MCF 10A (cell line): ENCODE measurements at regions of chr3 and their contacts with region 1.

Region 1: GRCh38 chr3:48194446-48195071 is 6.3 kb upstream of the CDC25A start:
- DNase-seq: peak; percentile 87
- H3K4me3 Mint-ChIP-seq: no peak overlapping the region
- H3K27ac Mint-ChIP-seq: no peak overlapping the region
- H3K4me1 Mint-ChIP-seq: no peaks in the 10 kb centered on the region
- H3K27me3 Mint-ChIP-seq: no peaks in the 10 kb centered on the region
- CTCF ChIP-seq: peak; percentile 94

Region 2: GRCh38 chr3:48119505-48120193 is 74.9 kb before region 1 on chr3:
- CTCF ChIA-PET with region 1: no interaction called
- POLR2A ChIA-PET with region 1: no interaction called
- intact Hi-C with region 1: no loop called
- DNase-seq: no peak
- H3K4me3 Mint-ChIP-seq: no peak overlapping the region
- H3K27ac Mint-ChIP-seq: no peak overlapping the region
- H3K4me1 Mint-ChIP-seq: no peaks in the 10 kb centered on the region
- H3K27me3 Mint-ChIP-seq: no peaks in the 10 kb centered on the region
- CTCF ChIP-seq: no peak

Region 3: GRCh38 chr3:48142316-48142870 is 52.2 kb before region 1 on chr3:
- CTCF ChIA-PET with region 1: no interaction called
- POLR2A ChIA-PET with region 1: no interaction called
- intact Hi-C with region 1: no loop called
- DNase-seq: peak; percentile 56
- H3K4me3 Mint-ChIP-seq: peak overlapping the region; percentile 21
- H3K27ac Mint-ChIP-seq: peak overlapping the region; percentile 57
- H3K4me1 Mint-ChIP-seq: peaks cover 15% of the 10 kb centered on the region
- H3K27me3 Mint-ChIP-seq: no peaks in the 10 kb centered on the region
- CTCF ChIP-seq: no peak

Region 4: DNA sequence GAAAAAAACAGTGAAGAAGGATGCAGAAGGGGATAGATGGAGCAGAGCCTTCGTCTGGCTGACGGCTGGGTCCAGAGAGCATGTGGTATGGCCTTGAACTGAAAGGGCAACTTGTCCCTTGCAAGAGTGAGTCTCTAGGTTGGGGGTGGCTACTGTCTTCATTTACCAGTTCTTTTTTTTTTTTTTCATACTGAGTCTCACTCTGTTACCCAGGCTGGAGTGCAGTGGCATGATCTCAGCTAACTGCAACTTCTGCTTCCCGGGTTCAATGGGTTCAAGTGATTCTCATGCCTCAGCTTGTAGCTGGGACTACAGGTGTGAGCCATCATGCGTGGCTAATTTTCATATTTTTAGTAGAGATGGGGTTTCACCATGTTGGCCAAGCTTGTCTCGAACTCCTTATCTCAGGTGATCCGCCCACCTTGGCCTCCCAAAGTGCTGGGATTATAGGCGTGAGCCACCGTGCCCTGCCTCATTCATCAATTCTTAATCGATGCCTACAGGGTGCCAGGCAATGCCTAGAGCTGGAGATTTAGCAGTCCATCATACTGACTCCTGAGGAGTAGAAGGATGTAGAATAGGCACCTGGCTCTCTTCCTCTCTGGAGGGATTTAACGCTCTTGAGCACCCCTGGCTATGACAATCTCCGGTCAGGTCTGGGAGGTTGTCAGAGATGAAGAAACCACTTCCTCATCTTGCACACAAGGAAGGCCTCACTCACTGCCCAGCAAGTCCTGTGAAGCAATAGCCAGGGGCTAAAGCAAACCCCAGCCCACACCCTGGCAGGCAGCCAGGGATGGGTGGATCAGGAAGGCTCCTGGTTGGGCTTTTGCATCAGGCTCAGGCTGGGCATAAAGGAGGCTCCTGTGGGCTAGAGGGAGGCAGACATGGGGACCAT is 28.3 kb after region 1 on chr3 and contains the start of gene CAMP:
- CTCF ChIA-PET with region 1: interaction called, 22 read pairs
- POLR2A ChIA-PET with region 1: no interaction called
- intact Hi-C with region 1: no loop called
- DNase-seq: peak; percentile 98
- H3K4me3 Mint-ChIP-seq: no peak within 1 kb of the TSS
- H3K27ac Mint-ChIP-seq: peak within 1 kb of the TSS; percentile 31
- H3K4me1 Mint-ChIP-seq: peaks cover 14% of the 10 kb centered on the region
- H3K27me3 Mint-ChIP-seq: no peaks in the 10 kb centered on the region
- CTCF ChIP-seq: no peak
- total RNA-seq, gene CAMP: 0.72 and 2.4 TPM in 2 replicates

Region 5: GRCh38 chr3:48232734-48233133 is 38.2 kb after region 1 on chr3:
- CTCF ChIA-PET with region 1: interaction called, 7 read pairs
- POLR2A ChIA-PET with region 1: no interaction called
- intact Hi-C with region 1: loop called (anchors 2 kb)
- DNase-seq: peak; percentile 87
- H3K4me3 Mint-ChIP-seq: peak overlapping the region; percentile 29
- H3K27ac Mint-ChIP-seq: no peak overlapping the region
- H3K4me1 Mint-ChIP-seq: peaks cover 11% of the 10 kb centered on the region
- H3K27me3 Mint-ChIP-seq: no peaks in the 10 kb centered on the region
- CTCF ChIP-seq: peak; percentile 65

Region 6: DNA sequence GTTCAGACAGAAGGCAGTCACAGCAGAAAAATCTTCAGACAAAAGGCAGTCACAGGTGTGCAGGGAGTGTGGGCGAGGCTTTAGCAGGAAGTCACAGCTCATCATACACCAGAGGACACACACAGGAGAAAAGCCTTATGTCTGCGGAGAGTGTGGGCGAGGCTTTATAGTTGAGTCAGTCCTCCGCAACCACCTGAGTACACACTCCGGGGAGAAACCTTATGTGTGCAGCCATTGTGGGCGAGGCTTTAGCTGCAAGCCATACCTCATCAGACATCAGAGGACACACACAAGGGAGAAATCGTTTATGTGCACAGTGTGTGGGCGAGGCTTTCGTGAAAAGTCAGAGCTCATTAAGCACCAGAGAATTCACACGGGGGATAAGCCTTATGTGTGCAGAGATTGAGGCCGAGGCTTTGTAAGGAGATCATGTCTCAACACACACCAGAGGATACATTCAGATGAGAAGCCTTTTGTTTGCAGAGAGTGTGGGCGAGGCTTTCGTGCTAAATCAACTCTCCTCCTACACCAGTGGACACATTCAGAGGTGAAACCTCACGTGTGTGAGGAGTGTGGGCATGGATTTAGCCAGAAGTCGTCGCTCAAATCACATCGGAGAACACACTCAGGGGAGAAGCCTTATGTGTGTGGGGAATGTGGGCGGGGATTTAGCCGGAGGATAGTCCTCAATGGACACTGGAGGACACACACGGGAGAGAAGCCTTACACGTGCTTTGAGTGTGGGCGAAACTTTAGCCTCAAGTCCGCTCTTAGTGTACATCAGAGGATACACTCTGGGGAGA is 74.0 kb after region 1 on chr3:
- CTCF ChIA-PET with region 1: interaction called, 17 read pairs
- POLR2A ChIA-PET with region 1: interaction called, 9 read pairs
- intact Hi-C with region 1: loop called (anchors 1 kb)
- DNase-seq: peak; percentile 86
- H3K4me3 Mint-ChIP-seq: peak overlapping the region; percentile 69
- H3K27ac Mint-ChIP-seq: peak overlapping the region; percentile 83
- H3K4me1 Mint-ChIP-seq: peaks cover 29% of the 10 kb centered on the region
- H3K27me3 Mint-ChIP-seq: no peaks in the 10 kb centered on the region
- CTCF ChIP-seq: no peak

Region 7: DNA sequence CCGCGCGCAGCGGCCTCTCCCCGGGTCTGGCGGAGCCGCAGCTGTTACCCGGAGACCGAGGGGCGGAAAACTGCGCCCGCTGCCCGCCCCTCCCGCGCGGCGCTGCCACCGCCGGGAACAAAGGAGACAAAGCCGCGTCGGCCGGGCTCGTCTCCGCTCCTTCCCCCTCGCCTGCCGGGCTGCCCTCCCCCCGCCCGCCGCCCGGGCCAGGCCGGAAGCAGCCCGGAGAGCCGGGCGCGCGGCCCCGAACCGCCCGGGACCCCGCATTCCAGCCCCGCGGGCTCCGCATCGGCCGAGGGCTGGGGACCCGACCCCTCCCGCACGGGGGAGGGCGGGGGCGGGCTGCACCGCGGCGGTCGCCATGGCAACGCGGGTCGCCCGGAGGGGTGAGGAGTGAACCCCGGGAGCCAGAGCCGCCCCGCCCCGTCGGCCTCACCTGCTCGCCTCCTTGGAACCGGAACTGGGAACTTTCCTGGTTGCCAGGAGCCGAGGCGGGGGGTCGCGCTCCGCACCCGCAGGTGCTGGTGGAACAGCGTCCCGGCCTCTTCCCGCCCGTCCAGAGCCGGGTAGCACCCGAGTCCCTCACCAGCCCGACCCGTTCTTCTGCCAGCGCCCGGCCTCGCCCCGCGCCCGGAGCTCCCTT is 234.9 kb after region 1 on chr3:
- CTCF ChIA-PET with region 1: interaction called, 65 read pairs
- POLR2A ChIA-PET with region 1: interaction called, 10 read pairs
- intact Hi-C with region 1: no loop called
- DNase-seq: peak; percentile 69
- H3K4me3 Mint-ChIP-seq: peak overlapping the region; percentile 99
- H3K27ac Mint-ChIP-seq: peak overlapping the region; percentile 98
- H3K4me1 Mint-ChIP-seq: peaks cover 71% of the 10 kb centered on the region
- H3K27me3 Mint-ChIP-seq: no peaks in the 10 kb centered on the region
- CTCF ChIP-seq: no peak

Region 8: GRCh38 chr3:48548729-48549705 is 354.5 kb after region 1 on chr3:
- CTCF ChIA-PET with region 1: interaction called, 7 read pairs
- POLR2A ChIA-PET with region 1: no interaction called
- intact Hi-C with region 1: loop called (anchors 5 kb)
- DNase-seq: peak; percentile 80
- H3K4me3 Mint-ChIP-seq: no peak overlapping the region
- H3K27ac Mint-ChIP-seq: no peak overlapping the region
- H3K4me1 Mint-ChIP-seq: no peaks in the 10 kb centered on the region
- H3K27me3 Mint-ChIP-seq: no peaks in the 10 kb centered on the region
- CTCF ChIP-seq: peak; percentile 97